GM10248 (cell line): ENCODE measurements at regions of chr3 and their contacts with region 1.

Region 1: GRCh38 chr3:159322322-159322939 is 520.6 kb downstream of the MFSD1 start:
- DNase-seq: peak; percentile 42
- CTCF ChIP-seq: peak; percentile 79

Region 2: GRCh38 chr3:159280386-159281191 is 41.8 kb before region 1 on chr3:
- CTCF ChIA-PET with region 1: no interaction called
- POLR2A ChIA-PET with region 1: no interaction called
- DNase-seq: no peak
- CTCF ChIP-seq: no peak

Region 3: DNA sequence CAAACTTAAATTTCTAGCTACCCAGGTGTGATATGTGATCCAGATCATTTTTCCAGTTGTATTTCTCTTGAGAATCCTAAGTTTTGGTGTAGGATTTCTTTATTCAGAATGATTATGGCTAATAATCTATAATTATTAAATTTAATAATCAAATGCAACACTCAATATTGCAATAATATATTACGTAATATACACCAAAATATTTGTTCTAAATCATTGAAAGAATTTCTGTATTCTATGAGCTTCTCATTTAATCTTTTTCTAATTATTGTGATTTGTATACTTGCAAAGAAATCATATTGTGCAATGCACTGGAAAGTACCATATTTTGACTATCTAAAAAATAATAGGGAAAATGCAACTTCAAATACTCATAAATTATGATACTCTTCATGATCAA is 11.0 kb before region 1 on chr3:
- CTCF ChIA-PET with region 1: interaction called, 25 read pairs
- POLR2A ChIA-PET with region 1: no interaction called
- DNase-seq: no peak
- CTCF ChIP-seq: no peak

Region 4: GRCh38 chr3:159378396-159379194 is 56.2 kb after region 1 on chr3:
- CTCF ChIA-PET with region 1: no interaction called
- POLR2A ChIA-PET with region 1: no interaction called
- DNase-seq: no peak
- CTCF ChIP-seq: no peak

Region 5: DNA sequence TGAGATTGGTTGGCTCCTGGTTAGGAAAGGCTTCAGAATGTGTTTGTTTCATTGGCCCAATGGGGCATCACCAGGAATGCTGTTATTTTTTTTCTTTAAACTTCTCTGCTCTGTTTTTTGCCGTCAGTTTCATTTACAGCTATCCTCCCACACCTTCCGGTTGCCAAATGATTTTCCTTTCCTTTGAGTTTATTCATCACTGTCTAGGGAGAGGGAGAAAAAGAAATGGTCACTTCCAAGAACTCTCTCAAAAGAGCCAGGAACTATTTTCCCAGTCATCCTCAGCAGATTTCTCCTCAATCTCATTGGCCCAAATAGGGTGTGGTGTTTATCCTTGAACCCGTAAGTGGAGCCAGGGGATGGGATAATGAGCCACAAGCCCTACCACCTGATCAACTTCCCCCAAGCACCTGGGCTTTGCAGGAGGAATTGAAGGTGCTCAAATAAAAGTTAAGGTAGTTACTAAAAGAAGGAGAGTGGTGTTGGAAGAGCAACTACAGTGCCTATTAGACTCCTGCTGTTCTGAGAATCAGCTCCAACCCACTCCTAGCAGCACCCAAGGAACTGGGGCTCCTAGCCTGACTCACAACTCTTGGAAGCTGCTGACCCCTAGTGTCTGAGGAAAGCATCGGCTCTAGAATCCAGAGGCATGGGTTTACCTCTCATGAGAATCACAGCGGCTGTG is 482.4 kb after region 1 on chr3:
- CTCF ChIA-PET with region 1: interaction called, 97 read pairs
- POLR2A ChIA-PET with region 1: no interaction called
- DNase-seq: peak; percentile 72
- CTCF ChIP-seq: peak; percentile 85